ENCODE measurements at regions of chr12 and their contacts with region 1.

Region 1: DNA sequence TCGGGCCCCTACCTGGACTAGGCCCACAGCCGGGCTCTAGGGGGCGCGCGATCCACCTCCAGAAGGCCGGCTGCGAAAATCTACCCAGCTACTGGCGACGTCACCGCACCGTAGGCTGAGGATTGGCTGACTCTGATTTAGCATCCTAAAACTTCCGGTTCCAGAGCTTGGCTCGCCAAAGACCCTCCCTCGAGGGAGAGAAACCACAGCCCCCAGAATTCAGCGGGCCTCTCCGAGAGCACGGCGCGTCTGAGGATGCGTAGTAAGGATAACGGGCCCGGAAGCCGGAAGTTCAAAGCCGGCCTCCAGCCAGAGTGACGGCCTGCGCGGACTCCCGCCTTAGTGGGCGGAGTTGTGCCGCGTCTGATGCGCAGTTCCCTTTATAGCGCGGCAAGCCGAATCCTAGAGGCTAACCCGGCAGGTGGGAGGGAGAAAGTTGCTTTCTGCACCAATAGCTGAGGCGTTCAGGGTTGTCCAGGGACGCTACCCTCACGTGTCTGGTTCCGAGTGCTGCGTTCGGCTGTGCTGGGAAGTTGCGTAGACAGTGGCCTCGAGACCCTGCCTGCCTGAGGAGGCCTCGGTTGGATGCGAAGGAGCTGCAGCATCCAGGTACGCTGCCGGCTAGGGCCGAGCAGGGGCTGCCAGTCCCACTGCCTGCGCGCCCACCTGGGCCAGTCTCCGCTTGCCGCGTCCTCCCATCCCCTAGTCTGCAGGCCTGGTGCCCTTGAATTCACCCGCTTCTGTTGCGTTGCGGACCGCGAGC is at the start of gene COX14:
- H3K4me3 Mint-ChIP-seq: peak within 1 kb of the TSS; percentile 90
- H3K27ac Mint-ChIP-seq: peak within 1 kb of the TSS; percentile 97
- H3K4me1 Mint-ChIP-seq: peaks cover 40% of the 10 kb centered on the region
- H3K27me3 Mint-ChIP-seq: no peaks in the 10 kb centered on the region

Region 2: GRCh38 chr12:50074936-50075807 is 36.7 kb before region 1 on chr12:
- intact Hi-C with region 1: loop called (anchors 5 kb)
- H3K4me3 Mint-ChIP-seq: no peak overlapping the region
- H3K27ac Mint-ChIP-seq: no peak overlapping the region
- H3K4me1 Mint-ChIP-seq: peaks cover 9% of the 10 kb centered on the region
- H3K27me3 Mint-ChIP-seq: peaks cover 39% of the 10 kb centered on the region

Region 3: GRCh38 chr12:50084775-50085614 is 26.9 kb before region 1 on chr12 and contains the start of gene SMARCD1:
- intact Hi-C with region 1: loop called (anchors 2 kb)
- H3K4me3 Mint-ChIP-seq: peak within 1 kb of the TSS; percentile 81
- H3K27ac Mint-ChIP-seq: peak within 1 kb of the TSS; percentile 89
- H3K4me1 Mint-ChIP-seq: peaks cover 29% of the 10 kb centered on the region
- H3K27me3 Mint-ChIP-seq: peaks cover 10% of the 10 kb centered on the region

Region 4: DNA sequence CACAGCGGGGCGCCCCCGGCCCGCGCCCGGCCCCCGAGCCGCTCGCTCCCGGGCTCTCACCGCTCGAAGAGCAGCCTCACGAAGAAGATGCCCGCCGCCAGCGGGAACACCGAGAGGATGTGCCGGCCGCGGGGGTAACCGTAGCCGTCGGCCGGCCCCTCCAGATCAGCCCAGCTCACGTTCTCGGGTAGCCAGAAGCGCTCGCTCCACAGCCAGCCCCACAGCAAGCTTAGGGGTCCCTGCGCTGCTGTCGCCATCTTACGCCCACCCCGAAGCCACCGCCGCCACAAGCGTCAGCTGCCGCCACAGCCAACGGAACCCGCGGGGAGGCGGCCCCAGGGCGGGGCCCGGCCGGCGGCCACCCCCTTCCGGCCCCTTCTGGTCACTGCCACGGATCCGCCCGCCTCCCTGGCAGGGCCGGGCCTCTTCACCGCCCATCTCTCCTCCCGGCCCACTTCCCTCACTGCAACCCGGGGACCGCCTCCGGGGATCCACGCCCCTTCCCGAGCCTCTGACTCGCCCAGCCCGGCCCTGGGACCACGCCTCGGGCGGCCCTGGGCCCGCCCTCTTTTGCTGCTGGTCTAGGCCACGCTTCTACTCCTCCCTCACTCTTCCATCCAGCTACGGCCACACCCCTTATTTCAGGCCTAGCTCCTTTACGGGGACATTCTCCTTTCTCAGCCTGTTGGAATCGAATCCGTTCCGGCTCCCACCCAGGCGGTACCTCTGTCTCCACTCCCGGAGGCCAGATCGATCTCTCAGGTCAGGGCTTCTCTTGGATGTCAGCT is 55.4 kb after region 1 on chr12 and contains the start of gene CERS5:
- intact Hi-C with region 1: loop called (anchors 1 kb)
- H3K4me3 Mint-ChIP-seq: peak within 1 kb of the TSS; percentile 82
- H3K27ac Mint-ChIP-seq: peak within 1 kb of the TSS; percentile 92
- H3K4me1 Mint-ChIP-seq: peaks cover 43% of the 10 kb centered on the region
- H3K27me3 Mint-ChIP-seq: no peaks in the 10 kb centered on the region

Measured in dendritic cell treated with granulocyte-macrophage colony-stimulating factor and Interleukin-4, amounts not matched to agents 40 ng/mL and 50 ng/mL, for 4 days (primary cell).